Lower leg skin (tissue), 4 donors: ENCODE measurements at regions of chrX and their contacts with region 1.

Region 1: GRCh38 chrX:23052324-23052723 is 52.6 kb downstream of the DDX53 start:
- DNase-seq: no peak
- H3K4me3 ChIP-seq: no peak overlapping the region
- CTCF ChIP-seq: no peak
- POLR2A ChIP-seq: no peak

Region 2: DNA sequence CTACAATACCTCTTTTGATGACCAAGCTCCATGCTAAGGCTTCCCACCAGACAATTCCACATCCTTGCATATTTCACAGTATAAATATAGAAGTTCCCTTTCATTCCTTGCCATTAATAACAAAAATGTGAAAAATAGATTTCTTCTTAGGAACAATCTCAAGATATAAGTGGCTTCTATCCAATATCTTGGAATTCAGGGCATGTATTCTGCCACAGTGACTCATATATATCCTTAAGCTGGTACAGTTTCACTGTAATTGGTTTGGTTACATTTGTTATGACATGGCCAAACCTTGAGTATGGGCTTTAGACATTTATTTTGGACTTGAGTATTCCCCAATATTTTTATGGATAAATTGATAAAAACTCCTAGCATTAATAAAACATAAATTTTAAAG is 234.3 kb before region 1 on chrX:
- intact Hi-C with region 1: loop called (anchors 5 kb)
- DNase-seq: no peak
- H3K4me3 ChIP-seq: no peak overlapping the region
- CTCF ChIP-seq: no peak
- POLR2A ChIP-seq: no peak